Activated CD4-positive, alpha-beta memory T cell treated with anti-CD3 and anti-CD28 coated beads for 36 hours (primary cell): ENCODE measurements at regions of chr4 and their contacts with region 1.

Region 1: GRCh38 chr4:7067452-7068278 is at the start of gene GRPEL1:
- DNase-seq: peak; percentile 100
- H3K4me3 Mint-ChIP-seq: peak within 1 kb of the TSS; percentile 95
- H3K27ac Mint-ChIP-seq: peak within 1 kb of the TSS; percentile 87
- H3K4me1 Mint-ChIP-seq: peaks cover 47% of the 10 kb centered on the region
- H3K27me3 Mint-ChIP-seq: peaks cover 2% of the 10 kb centered on the region
- total RNA-seq, gene GRPEL1: 63.8 to 68.7 TPM

Region 2: DNA sequence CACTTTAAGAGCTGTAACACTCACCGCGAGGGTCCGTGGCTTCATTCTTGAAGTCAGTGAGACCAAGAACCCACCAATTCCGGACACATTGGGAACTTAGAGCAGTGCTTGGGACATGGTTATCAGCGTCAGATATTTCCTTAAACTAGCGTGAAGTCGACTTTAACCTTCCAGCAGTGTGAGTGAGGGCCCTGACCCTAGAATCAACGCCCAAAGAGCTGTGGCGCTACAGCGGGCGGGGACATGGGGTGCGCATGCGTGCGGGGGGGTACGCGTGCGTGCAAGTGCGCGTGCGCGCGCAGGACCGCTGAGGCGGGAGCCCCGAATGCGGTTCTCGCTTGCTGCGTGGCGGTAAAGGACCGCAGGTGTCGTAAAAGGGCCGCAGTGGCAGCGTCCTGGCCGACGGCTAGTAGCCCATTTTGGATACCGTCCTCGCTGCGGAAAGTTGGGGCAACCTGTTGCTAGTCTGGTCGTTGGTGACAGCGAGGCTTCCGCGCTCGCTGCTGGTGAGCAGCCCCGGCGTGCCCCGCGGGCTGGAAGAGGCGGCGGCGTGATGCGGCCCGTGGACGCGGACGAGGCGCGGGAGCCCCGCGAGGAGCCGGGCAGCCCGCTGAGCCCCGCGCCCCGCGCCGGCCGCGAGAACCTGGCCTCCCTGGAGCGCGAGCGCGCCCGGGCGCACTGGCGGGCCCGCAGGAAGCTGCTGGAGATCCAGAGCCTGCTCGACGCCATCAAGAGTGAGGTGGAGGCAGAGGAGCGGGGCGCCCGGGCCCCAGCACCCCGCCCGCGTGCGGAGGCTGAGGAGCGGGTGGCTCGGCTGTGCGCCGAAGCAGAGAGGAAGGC is 393.8 kb before region 1 on chr4:
- CTCF ChIA-PET with region 1: interaction called, 5 read pairs
- POLR2A ChIA-PET with region 1: interaction called, 7 read pairs
- intact Hi-C with region 1: loop called (anchors 1 kb)
- DNase-seq: peak; percentile 96
- H3K4me3 Mint-ChIP-seq: peak overlapping the region; percentile 95
- H3K27ac Mint-ChIP-seq: peak overlapping the region; percentile 93
- H3K4me1 Mint-ChIP-seq: peaks cover 43% of the 10 kb centered on the region
- H3K27me3 Mint-ChIP-seq: peaks cover 2% of the 10 kb centered on the region

Region 3: DNA sequence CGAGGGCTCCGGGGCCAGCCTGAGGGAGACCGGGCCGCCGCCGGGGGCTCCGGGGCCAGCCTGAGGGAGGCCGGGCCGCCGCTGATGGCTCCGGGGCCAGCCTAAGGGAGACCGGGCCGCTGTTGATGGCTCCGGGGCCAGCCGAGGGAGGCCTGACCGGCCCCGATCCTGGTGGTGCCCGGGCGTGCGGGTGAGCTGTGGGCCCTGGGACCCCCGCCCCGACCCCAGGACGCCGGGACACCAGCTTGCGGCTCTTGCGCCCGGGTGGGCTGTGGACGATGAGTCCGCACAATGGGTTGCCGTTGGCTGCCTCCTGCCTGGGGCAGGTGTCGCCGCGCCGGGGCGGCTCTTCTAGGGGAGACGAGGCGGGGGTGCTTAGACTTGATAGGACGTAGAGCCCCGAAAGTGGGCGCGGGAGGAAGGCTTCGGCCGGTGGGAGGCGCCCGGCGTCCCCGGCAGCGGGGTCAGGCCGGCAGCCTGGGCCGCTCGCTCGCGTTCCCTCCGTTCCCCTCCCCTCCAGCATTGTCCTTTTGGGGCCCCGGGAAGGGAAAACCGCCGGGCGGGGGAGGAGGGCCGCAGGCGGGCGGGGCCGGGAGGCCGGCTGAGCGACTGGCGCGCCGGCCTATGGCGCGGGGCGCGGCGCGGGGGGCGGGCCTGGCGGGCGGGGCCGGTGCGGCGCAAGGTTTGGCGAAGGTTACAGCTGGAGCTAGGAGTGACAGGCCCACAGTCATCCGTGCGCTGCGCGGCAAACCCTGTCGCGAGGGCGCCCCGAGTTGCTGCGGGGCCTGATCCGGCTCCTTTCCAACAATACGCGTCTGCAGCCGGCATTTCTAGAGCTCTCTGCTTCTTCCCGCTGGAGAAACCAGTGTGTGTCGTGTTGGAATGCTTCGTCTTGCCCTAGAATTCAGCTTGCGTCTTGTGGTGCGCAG is 284.3 kb before region 1 on chr4:
- CTCF ChIA-PET with region 1: no interaction called
- POLR2A ChIA-PET with region 1: interaction called, 8 read pairs
- intact Hi-C with region 1: loop called (anchors 1 kb)
- DNase-seq: peak; percentile 94
- H3K4me3 Mint-ChIP-seq: peak overlapping the region; percentile 80
- H3K27ac Mint-ChIP-seq: peak overlapping the region; percentile 77
- H3K4me1 Mint-ChIP-seq: peaks cover 47% of the 10 kb centered on the region
- H3K27me3 Mint-ChIP-seq: no peaks in the 10 kb centered on the region

Region 4: DNA sequence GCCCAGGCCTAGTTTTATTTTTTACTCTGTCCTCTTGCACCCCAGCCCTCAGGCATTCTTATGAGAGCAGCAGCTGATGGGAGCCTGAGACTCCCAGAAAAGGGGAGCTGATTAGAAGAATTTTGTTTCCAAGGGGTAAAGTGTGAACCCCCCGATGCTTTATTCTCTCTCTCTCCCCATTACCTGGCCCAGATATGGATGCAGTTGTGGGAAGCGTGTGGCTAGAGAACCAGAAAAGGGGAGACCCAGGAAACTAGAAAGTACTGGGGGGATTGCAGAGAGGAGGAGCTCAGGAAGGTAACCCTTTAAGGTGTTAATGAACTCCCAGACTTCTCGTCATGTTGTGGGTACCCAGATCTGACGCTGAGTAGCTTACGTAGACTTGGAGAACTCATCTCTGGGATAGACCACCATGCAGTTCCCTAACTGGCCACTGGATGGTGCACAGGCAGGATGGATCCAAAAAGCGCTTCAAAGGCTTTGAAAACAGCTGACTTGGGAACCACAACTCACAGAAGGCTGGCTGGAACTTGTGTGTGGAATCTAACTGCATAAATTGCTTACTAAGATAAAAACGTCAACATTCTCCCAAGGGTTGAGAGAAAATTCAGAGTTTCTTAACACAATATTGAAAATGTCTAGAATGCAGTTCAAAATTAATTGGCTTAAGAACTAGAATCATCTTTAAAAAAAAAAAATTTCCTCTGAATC is 93.4 kb before region 1 on chr4:
- CTCF ChIA-PET with region 1: interaction called, 37 read pairs
- POLR2A ChIA-PET with region 1: interaction called, 7 read pairs
- intact Hi-C with region 1: loop called (anchors 1 kb)
- DNase-seq: peak; percentile 90
- H3K4me3 Mint-ChIP-seq: no peak overlapping the region
- H3K27ac Mint-ChIP-seq: peak overlapping the region; percentile 51
- H3K4me1 Mint-ChIP-seq: peaks cover 8% of the 10 kb centered on the region
- H3K27me3 Mint-ChIP-seq: no peaks in the 10 kb centered on the region

Region 5: DNA sequence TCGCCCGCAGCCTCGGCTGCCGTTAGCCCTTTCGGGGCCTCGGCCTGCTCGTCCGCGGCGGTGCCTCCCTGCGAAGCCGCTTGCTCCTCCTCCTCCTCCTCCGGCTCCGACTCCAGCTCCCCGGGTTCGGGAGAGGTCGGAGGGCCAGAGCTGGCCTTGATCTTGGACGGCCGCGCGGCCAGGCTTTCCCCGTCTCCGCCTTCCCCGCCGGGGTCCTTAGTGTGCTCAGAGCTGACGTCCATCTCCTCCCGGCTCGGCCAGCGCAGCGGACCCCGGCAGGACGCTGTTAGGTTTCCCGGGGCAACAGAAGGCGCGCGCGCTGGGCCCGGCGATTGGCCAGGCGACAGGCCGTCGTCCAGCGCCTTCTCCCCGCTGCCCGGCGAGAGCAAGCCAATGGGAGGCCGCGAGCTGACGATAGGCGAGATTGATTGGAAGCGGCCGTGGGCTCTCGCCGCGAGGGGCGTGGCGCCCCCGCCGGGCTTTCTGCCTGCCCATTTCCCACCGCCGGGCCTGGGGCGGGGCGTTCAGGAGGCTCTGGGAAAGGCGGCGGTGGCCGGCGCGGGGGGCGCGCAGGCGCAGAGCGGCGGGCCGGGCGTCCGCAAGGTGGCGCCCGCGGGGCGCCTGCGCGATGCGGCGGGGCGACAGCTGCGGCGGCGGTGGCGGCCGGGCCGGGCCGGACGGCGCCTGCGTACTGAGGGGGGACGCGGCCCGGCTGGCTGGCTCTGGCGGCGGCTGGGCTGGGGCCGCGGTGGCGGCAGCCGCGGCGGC is 24.8 kb before region 1 on chr4 and contains the start of gene TADA2B:
- CTCF ChIA-PET with region 1: interaction called, 176 read pairs
- POLR2A ChIA-PET with region 1: interaction called, 106 read pairs
- intact Hi-C with region 1: loop called (anchors 1 kb)
- DNase-seq: peak; percentile 96
- H3K4me3 Mint-ChIP-seq: peak within 1 kb of the TSS; percentile 89
- H3K27ac Mint-ChIP-seq: peak within 1 kb of the TSS; percentile 67
- H3K4me1 Mint-ChIP-seq: peaks cover 45% of the 10 kb centered on the region
- H3K27me3 Mint-ChIP-seq: no peaks in the 10 kb centered on the region
- total RNA-seq, gene TADA2B: 10.8 to 11.5 TPM

Region 6: DNA sequence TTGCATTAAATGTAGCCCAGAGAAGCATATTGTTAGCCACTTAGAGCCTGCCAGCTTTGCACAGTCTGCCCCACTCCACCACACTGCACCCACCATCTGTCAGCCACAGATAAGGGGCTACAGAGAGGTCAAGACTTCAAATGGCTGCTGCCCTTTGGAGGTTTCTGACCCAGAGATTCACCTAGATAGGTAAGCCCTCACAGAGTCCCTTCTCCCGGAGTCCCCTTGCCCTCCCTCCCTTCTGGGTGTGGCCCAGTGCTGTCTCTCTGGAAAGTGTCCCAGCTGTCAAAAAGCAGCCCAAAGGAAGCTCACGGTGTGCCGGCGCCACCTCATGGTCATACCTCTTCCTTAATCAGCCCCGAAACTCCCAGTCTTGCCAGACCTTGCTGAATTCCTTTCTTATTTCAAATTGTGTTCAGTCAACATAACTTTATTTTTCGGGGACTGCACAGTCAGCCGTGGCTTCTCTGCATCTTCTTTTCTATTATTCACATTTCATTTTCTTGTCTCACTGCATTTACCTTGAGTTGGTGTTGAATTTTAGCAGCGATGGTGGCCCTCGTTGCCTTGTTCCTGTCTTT is 14.3 kb after region 1 on chr4:
- CTCF ChIA-PET with region 1: interaction called, 23 read pairs
- POLR2A ChIA-PET with region 1: no interaction called
- intact Hi-C with region 1: no loop called
- DNase-seq: peak; percentile 66
- H3K4me3 Mint-ChIP-seq: no peak overlapping the region
- H3K27ac Mint-ChIP-seq: no peak overlapping the region
- H3K4me1 Mint-ChIP-seq: no peaks in the 10 kb centered on the region
- H3K27me3 Mint-ChIP-seq: peaks cover 25% of the 10 kb centered on the region

Region 7: GRCh38 chr4:7134737-7135388 is 67.2 kb after region 1 on chr4:
- CTCF ChIA-PET with region 1: no interaction called
- POLR2A ChIA-PET with region 1: no interaction called
- intact Hi-C with region 1: no loop called
- DNase-seq: no peak
- H3K4me3 Mint-ChIP-seq: no peak overlapping the region
- H3K27ac Mint-ChIP-seq: no peak overlapping the region
- H3K4me1 Mint-ChIP-seq: peaks cover 2% of the 10 kb centered on the region
- H3K27me3 Mint-ChIP-seq: no peaks in the 10 kb centered on the region

Region 8: GRCh38 chr4:7973545-7973981 is 905.9 kb after region 1 on chr4:
- CTCF ChIA-PET with region 1: no interaction called
- POLR2A ChIA-PET with region 1: no interaction called
- intact Hi-C with region 1: loop called (anchors 10 kb)
- DNase-seq: peak; percentile 65
- H3K4me3 Mint-ChIP-seq: peak overlapping the region; percentile 98
- H3K27ac Mint-ChIP-seq: peak overlapping the region; percentile 100
- H3K4me1 Mint-ChIP-seq: peaks cover 47% of the 10 kb centered on the region
- H3K27me3 Mint-ChIP-seq: no peaks in the 10 kb centered on the region